CD8-positive, alpha-beta memory T cell (primary cell): ENCODE measurements at regions of chr7 and their contacts with region 1.

Region 1: GRCh38 chr7:143380255-143380645 is 895 bp upstream of the ZYX start:
- DNase-seq: peak; percentile 72 to 89 (median 79)
- H3K4me3 ChIP-seq: peak overlapping the region; percentile 85
- H3K4me3 Mint-ChIP-seq: peak overlapping the region; percentile 89 to 97 (median 93)
- H3K27ac ChIP-seq: peak overlapping the region; percentile 96
- H3K27ac Mint-ChIP-seq: peak overlapping the region; percentile 83 to 99 (median 95)
- H3K4me1 ChIP-seq: peaks cover 70% of the 10 kb centered on the region
- H3K4me1 Mint-ChIP-seq: peaks cover 44 to 45% (median 45%) of the 10 kb centered on the region in 3 donors
- H3K27me3 ChIP-seq: no peaks in the 10 kb centered on the region
- H3K27me3 Mint-ChIP-seq: peaks cover 0 to 2% of the 10 kb centered on the region in 2 donors

Region 2: DNA sequence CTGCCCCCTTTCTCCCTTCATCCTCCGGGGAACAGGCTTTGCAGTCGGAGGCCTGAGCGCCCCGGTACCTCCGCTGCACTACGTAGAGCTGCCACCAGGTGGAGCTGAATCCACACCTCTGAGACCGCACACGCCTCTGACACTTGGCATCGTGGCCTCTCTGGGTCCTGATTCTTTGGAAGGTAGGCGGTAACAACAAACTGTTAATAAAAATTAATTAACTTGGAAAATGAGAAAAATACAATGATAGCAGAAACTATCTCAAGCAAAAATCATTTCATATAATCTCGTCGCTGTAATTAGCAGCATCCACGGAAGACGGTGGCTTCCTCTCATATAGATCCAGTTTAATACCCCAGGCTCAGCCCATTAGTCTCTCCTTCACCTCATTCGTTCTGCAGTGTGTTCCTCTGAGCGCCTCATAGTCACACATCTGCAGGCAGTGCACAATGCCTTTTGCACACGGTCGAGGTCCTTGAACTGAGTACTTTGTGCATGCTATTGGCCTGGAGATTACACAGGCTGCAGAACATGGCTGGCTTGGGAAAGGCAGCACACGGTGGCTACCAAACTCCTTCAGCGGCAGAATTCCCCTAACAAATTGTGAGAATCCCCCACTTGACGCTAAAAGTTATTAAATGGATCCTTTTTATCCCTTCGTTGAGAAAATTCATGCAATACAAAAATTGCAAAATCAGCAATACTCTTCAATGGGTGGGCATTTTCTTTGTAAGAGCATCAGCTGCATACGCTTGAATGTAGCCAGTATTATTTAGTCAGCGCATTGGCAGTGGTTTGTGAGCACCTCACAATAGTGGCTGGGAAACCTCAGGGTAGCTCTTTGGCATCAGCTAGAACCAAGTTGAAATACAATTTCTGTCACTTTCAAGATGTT is 372.0 kb before region 1 on chr7:
- CTCF ChIA-PET with region 1: no interaction called
- POLR2A ChIA-PET with region 1: no interaction called
- DNase-seq: peak; percentile 66 to 85 (median 69)
- H3K4me3 ChIP-seq: no peak overlapping the region
- H3K4me3 Mint-ChIP-seq: no peak overlapping the region
- H3K27ac ChIP-seq: no peak overlapping the region
- H3K27ac Mint-ChIP-seq: peak overlapping the region in 1 of 8 donors; percentile 8
- H3K4me1 ChIP-seq: peaks cover 1% of the 10 kb centered on the region
- H3K4me1 Mint-ChIP-seq: peaks cover 6 to 9% (median 7%) of the 10 kb centered on the region in 3 donors
- H3K27me3 ChIP-seq: peaks cover 6% of the 10 kb centered on the region
- H3K27me3 Mint-ChIP-seq: peaks cover 4 to 14% of the 10 kb centered on the region in 2 donors

Region 3: GRCh38 chr7:143345428-143345900 is 34.8 kb before region 1 on chr7:
- CTCF ChIA-PET with region 1: interaction called, 18 read pairs
- POLR2A ChIA-PET with region 1: no interaction called
- DNase-seq: peak; percentile 38 to 75 (median 51)
- H3K4me3 ChIP-seq: peak overlapping the region; percentile 23
- H3K4me3 Mint-ChIP-seq: peak overlapping the region in 6 of 7 donors; percentile 58 to 79 (median 78)
- H3K27ac ChIP-seq: no peak overlapping the region
- H3K27ac Mint-ChIP-seq: peak overlapping the region in 2 of 8 donors; percentile 42 to 92
- H3K4me1 ChIP-seq: peaks cover 8% of the 10 kb centered on the region
- H3K4me1 Mint-ChIP-seq: peaks cover 7 to 10% (median 9%) of the 10 kb centered on the region in 3 donors
- H3K27me3 ChIP-seq: no peaks in the 10 kb centered on the region
- H3K27me3 Mint-ChIP-seq: peaks cover 7 to 16% of the 10 kb centered on the region in 2 donors

Region 4: GRCh38 chr7:143355450-143356385 is 24.5 kb before region 1 on chr7:
- CTCF ChIA-PET with region 1: interaction called, 11 read pairs
- POLR2A ChIA-PET with region 1: interaction called, 4 read pairs
- DNase-seq: no peak
- H3K4me3 ChIP-seq: no peak overlapping the region
- H3K4me3 Mint-ChIP-seq: no peak overlapping the region
- H3K27ac ChIP-seq: no peak overlapping the region
- H3K27ac Mint-ChIP-seq: peak overlapping the region in 1 of 8 donors; percentile 60
- H3K4me1 ChIP-seq: no peaks in the 10 kb centered on the region
- H3K4me1 Mint-ChIP-seq: peaks cover 3 to 10% (median 5%) of the 10 kb centered on the region in 3 donors
- H3K27me3 ChIP-seq: no peaks in the 10 kb centered on the region
- H3K27me3 Mint-ChIP-seq: peaks cover 5 to 6% of the 10 kb centered on the region in 2 donors

Region 5: DNA sequence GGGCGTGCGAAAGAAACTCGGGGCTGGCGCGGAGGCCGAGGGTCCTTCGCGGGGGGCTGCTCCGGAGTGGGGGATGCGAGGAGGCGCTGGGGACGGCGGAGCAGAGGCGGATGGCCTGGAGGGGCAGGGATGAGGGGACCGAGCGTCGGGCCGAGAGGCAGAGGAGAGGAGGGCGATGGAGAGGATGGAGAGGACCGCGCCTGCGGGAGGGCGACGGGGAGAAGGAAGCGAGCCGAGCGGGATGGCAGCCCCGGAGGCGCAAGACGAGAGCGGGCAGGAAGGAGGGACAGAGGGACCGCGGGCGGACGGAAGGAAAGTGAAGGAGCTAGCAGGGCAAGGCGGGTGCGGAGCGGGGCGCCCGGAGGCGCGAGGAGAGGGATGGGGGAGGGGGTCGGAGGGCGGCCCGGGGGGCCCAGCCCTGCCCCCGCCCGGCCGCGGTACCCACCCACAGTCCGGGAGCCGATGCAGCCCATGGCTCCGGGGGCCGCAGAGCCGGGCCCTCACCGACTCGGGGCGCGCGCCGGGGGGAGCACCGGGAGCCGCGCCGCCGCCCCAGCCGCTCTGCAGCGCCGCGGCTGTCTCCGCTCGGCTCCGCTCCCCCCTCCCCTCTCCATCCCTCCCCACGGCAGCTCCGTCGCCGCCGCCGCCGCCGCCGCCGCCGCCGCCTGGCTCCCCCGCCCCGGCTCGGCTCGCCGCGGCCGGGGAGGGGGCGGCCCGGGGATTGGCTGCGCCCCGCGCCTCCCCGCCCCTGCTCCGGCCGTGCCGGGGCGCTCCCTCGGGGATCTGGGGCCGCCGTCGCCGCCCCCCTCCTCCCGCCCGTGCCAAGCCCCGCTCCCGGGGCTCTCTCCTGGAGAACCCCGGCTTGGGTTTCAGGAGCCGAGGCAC is 17.9 kb before region 1 on chr7 and contains the start of gene FAM131B:
- CTCF ChIA-PET with region 1: interaction called, 14 read pairs
- POLR2A ChIA-PET with region 1: interaction called, 6 read pairs
- DNase-seq: peak in 3 of 5 donors; percentile 34 to 64 (median 38)
- H3K4me3 ChIP-seq: peak within 1 kb of the TSS; percentile 47
- H3K4me3 Mint-ChIP-seq: peak within 1 kb of the TSS; percentile 74 to 96 (median 85)
- H3K27ac ChIP-seq: no peak within 1 kb of the TSS
- H3K27ac Mint-ChIP-seq: peak within 1 kb of the TSS in 6 of 8 donors; percentile 37 to 91 (median 68)
- H3K4me1 ChIP-seq: peaks cover 7% of the 10 kb centered on the region
- H3K4me1 Mint-ChIP-seq: peaks cover 10 to 16% (median 11%) of the 10 kb centered on the region in 3 donors
- H3K27me3 ChIP-seq: peaks cover 25% of the 10 kb centered on the region
- H3K27me3 Mint-ChIP-seq: peaks cover 14 to 25% of the 10 kb centered on the region in 2 donors
- total RNA-seq, gene FAM131B: 2.4 to 2.8 TPM

Region 6: DNA sequence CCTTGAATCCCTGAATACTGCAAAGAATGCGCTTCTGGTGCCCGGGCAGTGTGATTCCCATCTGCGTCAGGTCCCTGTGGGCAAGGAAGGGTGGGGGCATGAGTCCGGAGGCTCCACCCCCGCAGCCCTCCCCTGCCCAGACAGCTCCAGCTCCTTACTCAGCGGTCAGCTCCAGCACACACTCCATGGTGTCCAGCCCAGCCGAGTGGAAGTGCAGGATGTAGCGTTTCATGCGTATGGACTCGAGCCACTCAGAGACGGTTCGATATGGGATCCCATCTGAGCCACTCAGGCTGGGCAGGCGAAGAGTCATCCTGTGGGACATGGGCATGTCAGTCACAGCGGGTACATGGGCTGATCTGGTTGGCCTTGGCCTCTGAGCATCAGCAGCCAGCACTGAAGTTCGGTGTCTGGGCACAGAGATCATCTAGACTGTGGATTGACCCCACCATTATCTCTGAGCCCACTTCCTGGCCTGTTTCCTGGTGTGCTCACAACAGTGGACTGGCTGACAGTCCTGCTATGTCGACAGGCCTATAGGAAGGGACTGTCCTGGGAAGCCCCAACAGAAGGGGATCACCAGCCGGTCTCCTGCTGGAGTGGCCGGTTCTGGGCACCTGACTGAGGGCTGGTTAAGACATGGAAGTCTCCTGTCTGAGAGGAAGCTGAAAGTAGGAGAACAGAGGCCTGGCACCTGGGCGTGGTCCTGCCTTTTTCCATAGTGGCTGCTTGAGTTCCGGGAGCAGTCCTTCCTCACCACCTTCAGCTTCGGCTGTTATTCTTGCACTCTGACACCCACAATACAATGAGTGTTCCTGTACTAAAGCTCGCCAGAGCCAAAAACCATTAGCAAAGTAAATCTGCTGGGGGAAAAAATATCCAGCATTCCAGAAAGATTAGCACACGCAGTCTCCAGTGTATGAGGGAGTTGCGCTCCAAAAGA is 11.5 kb after region 1 on chr7:
- CTCF ChIA-PET with region 1: interaction called, 18 read pairs
- POLR2A ChIA-PET with region 1: interaction called, 6 read pairs
- DNase-seq: no peak
- H3K4me3 ChIP-seq: no peak overlapping the region
- H3K4me3 Mint-ChIP-seq: no peak overlapping the region
- H3K27ac ChIP-seq: no peak overlapping the region
- H3K27ac Mint-ChIP-seq: peak overlapping the region in 4 of 8 donors; percentile 15 to 84 (median 23)
- H3K4me1 ChIP-seq: peaks cover 5% of the 10 kb centered on the region
- H3K4me1 Mint-ChIP-seq: peaks cover 17 to 36% (median 22%) of the 10 kb centered on the region in 3 donors
- H3K27me3 ChIP-seq: no peaks in the 10 kb centered on the region
- H3K27me3 Mint-ChIP-seq: no peaks in the 10 kb centered on the region

Region 7: DNA sequence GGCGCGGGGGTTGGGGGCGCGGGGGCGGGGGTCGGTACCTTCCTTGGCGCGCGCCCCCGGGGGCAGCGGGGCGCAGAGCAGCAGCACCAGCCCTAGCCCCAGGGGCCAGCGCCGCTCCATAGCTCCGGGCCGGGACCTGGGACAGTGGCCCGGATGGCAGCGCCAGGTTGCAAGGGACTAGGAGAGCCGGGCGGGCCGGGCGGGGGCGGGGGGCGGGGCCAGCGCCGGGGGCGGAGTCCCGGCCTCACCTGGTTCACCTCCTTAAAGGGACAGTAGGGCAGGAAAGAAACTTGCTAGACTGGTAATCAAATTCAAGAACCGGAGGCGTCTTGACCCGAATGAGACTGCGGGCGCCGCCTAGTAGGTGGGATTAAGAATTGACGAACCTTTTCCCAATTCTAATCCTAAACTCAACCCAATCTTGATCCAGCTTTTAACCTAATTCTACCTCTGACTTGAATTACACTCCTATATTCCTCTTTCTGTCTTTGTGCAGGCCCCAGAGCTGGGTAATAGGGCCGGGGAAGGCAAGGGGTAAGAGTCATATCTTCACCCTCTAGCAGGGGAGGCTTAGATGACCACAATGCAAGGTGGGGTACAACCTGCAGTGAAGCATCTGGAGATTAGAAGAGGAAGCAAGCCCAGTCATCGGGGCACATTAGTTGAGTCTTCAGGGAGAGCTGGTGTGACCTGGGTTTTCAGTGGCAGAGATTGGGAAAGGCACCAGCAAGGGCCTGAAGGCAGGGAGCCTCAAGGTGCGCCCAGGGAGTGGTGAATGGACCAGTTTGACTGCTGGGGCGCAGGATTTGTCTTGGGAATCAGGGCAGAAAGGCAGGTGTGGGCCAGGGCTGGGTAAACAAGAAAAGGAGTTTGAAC is 28.7 kb after region 1 on chr7 and contains the start of gene EPHA1:
- CTCF ChIA-PET with region 1: interaction called, 45 read pairs
- POLR2A ChIA-PET with region 1: interaction called, 48 read pairs
- DNase-seq: peak; percentile 28 to 64 (median 45)
- H3K4me3 ChIP-seq: peak within 1 kb of the TSS; percentile 81
- H3K4me3 Mint-ChIP-seq: peak within 1 kb of the TSS; percentile 78 to 97 (median 89)
- H3K27ac ChIP-seq: no peak within 1 kb of the TSS
- H3K27ac Mint-ChIP-seq: peak within 1 kb of the TSS; percentile 63 to 99 (median 94)
- H3K4me1 ChIP-seq: peaks cover 57% of the 10 kb centered on the region
- H3K4me1 Mint-ChIP-seq: peaks cover 41 to 60% (median 53%) of the 10 kb centered on the region in 3 donors
- H3K27me3 ChIP-seq: no peaks in the 10 kb centered on the region
- H3K27me3 Mint-ChIP-seq: peaks cover 8 to 21% of the 10 kb centered on the region in 2 donors
- total RNA-seq, gene EPHA1: 2.8 to 3.1 TPM

Region 8: GRCh38 chr7:143416565-143417149 is 36.4 kb after region 1 on chr7:
- CTCF ChIA-PET with region 1: interaction called, 30 read pairs
- POLR2A ChIA-PET with region 1: no interaction called
- DNase-seq: peak in 2 of 5 donors; percentile 49 to 56
- H3K4me3 ChIP-seq: no peak overlapping the region
- H3K4me3 Mint-ChIP-seq: no peak overlapping the region
- H3K27ac ChIP-seq: no peak overlapping the region
- H3K27ac Mint-ChIP-seq: no peak overlapping the region
- H3K4me1 ChIP-seq: no peaks in the 10 kb centered on the region
- H3K4me1 Mint-ChIP-seq: peaks cover 0 to 5% (median 4%) of the 10 kb centered on the region in 3 donors
- H3K27me3 ChIP-seq: no peaks in the 10 kb centered on the region
- H3K27me3 Mint-ChIP-seq: peaks cover 13 to 18% of the 10 kb centered on the region in 2 donors